Caco-2 (cell line): ENCODE measurements at regions of chr13 and their contacts with region 1.

Region 1: DNA sequence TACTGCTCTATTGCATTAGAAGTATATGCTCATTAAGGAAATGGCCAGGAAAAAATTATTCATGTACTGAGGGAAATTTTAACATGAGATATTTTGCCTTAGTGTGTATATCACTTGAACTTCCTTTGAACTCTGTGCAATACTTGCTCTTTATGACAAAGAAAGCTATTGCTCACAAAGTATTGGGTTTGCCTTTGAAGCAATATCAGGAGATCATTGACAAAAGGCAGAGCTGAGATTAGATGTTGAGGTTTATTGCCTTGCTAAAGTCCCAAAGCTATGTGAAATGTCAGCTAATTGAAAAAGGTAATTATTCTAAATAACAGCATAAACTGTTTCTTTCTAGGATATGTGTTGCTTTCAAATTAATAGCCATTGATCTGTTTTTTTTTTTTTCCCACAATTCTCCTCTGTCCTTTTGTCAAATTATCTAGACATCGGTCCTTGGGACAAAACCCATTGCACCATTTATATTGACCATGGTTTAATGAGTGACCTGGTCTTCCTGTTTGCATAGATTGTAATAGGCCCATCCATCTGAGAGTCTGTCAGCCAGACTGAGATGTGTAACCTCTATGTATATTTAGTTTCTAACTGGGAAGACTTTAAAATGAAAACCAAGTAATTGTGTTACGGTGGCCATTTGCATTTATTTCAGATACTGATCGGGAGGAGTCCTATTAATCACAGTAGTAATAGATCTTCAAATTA is 752.7 kb upstream of the GPC6 start:
- DNase-seq: peak; percentile 51 to 57
- H3K4me3 ChIP-seq: no peak overlapping the region
- H3K4me3 Mint-ChIP-seq: peak overlapping the region; percentile 46
- H3K27ac Mint-ChIP-seq: peak overlapping the region; percentile 22
- H3K4me1 ChIP-seq: peaks cover 16% of the 10 kb centered on the region
- H3K4me1 Mint-ChIP-seq: no peaks in the 10 kb centered on the region
- H3K27me3 ChIP-seq: no peaks in the 10 kb centered on the region
- H3K27me3 Mint-ChIP-seq: no peaks in the 10 kb centered on the region
- CTCF ChIP-seq: no peak

Region 2: GRCh38 chr13:92412996-92413395 is 60.9 kb before region 1 on chr13:
- CTCF ChIA-PET with region 1: no interaction called
- POLR2A ChIA-PET with region 1: no interaction called
- intact Hi-C with region 1: loop called (anchors 1 kb)
- DNase-seq: no peak
- H3K4me3 ChIP-seq: no peak overlapping the region
- H3K4me3 Mint-ChIP-seq: no peak overlapping the region
- H3K27ac Mint-ChIP-seq: no peak overlapping the region
- H3K4me1 ChIP-seq: peaks cover 17% of the 10 kb centered on the region
- H3K4me1 Mint-ChIP-seq: peaks cover 33% of the 10 kb centered on the region
- H3K27me3 ChIP-seq: no peaks in the 10 kb centered on the region
- H3K27me3 Mint-ChIP-seq: no peaks in the 10 kb centered on the region
- CTCF ChIP-seq: no peak

Region 3: DNA sequence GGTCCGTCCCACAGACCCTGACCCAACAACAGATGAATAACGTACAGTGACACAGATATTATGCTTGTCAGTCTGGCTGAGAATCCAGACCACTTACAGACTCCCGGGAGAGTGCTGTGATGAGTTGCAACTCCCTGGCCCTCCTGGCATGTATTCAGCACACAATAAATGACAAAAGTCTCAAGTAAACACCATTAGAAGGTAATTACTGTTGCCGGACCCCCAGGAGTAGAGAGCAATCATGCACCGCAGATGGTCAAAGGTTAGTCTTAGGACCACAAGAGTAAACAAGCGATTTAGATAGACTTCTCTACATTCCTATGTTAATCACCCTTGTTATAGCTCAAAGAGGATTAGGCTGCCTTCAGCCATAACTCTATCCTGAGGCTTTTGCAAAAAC is 26.3 kb after region 1 on chr13:
- CTCF ChIA-PET with region 1: no interaction called
- POLR2A ChIA-PET with region 1: no interaction called
- intact Hi-C with region 1: loop called (anchors 1 kb)
- DNase-seq: peak; percentile 51 to 74
- H3K4me3 ChIP-seq: no peak overlapping the region
- H3K4me3 Mint-ChIP-seq: peak overlapping the region; percentile 4
- H3K27ac Mint-ChIP-seq: peak overlapping the region; percentile 69
- H3K4me1 ChIP-seq: peaks cover 18% of the 10 kb centered on the region
- H3K4me1 Mint-ChIP-seq: peaks cover 41% of the 10 kb centered on the region
- H3K27me3 ChIP-seq: no peaks in the 10 kb centered on the region
- H3K27me3 Mint-ChIP-seq: no peaks in the 10 kb centered on the region
- CTCF ChIP-seq: no peak

Region 4: DNA sequence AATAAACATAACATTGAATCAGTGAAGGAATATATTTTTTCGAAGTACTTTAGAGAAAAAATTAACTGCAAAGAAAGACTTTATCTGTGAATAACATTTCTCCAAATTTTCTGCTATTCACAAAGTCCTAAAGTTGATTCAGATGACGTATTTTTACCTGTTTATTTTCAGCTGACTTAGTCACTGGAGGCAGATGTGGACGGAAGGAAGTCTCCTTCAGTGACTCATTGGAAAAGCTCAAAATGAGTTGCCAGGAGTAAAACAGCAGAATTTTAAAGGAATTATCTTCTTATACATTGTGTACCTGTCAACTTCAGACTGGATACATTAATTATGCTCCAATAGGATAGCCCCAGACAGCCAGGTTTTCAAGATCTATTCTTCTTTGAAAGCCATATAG is 73.3 kb after region 1 on chr13:
- CTCF ChIA-PET with region 1: no interaction called
- POLR2A ChIA-PET with region 1: no interaction called
- intact Hi-C with region 1: no loop called
- DNase-seq: no peak
- H3K4me3 ChIP-seq: no peak overlapping the region
- H3K4me3 Mint-ChIP-seq: no peak overlapping the region
- H3K27ac Mint-ChIP-seq: no peak overlapping the region
- H3K4me1 ChIP-seq: 0 out of 2 replicates have a peak, but pooled peaks cover 11% of the 10 kb centered on the region
- H3K4me1 Mint-ChIP-seq: no peaks in the 10 kb centered on the region
- H3K27me3 ChIP-seq: no peaks in the 10 kb centered on the region
- H3K27me3 Mint-ChIP-seq: no peaks in the 10 kb centered on the region
- CTCF ChIP-seq: no peak